ENCODE measurements at regions of chr1 and their contacts with region 1.

Region 1: GRCh38 chr1:198620951-198621824 is 17.7 kb upstream of the PTPRC start:
- DNase-seq: peak; percentile 92
- ATAC-seq: peak; percentile 67
- H3K4me3 ChIP-seq: peak overlapping the region; percentile 27 to 70 (median 52)
- H3K4me3 Mint-ChIP-seq: peak overlapping the region; percentile 86
- H3K27ac ChIP-seq: peak overlapping the region; percentile 90 to 95
- H3K27ac Mint-ChIP-seq: peak overlapping the region; percentile 98
- H3K4me1 ChIP-seq: peaks cover 69 to 75% of the 10 kb centered on the region in 2 donors
- H3K4me1 Mint-ChIP-seq: peaks cover 80% of the 10 kb centered on the region
- H3K27me3 ChIP-seq: no peaks in the 10 kb centered on the region
- H3K27me3 Mint-ChIP-seq: no peaks in the 10 kb centered on the region
- CTCF ChIP-seq: no peak

Region 2: DNA sequence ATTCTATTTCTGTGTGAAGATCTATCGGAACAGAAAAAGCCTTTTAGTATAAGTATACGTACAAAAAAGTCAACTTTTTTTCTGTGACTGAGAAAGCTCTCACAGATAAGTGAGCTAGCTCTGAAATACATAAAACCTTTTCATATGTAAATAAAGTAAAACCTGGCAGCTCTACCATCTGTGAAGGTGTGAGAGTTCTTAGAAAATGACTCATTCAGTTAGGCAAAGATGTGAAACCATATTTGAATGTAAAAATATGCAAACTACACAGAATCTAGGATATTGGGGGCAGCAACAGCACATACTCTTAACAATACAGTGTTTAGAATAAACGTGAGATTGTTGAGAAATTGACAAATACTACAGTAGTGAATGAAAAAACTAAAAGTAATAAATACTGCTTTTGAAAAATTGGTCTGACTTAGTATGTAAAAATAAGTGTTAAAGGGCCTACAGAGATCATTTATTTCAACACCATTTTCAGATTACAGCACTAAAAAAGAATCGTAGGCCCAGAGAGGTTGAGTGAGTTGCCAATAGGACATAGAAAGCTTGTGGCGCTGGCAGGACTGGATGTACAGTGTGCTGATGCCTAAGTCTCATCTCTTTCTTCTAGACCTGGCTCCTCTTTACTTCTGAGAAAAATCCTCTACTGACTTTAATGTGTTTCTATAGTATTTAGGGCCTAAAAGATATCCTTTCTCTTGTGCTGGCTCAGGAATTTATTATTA is 100.5 kb before region 1 on chr1:
- CTCF ChIA-PET with region 1: interaction called, 12 read pairs
- POLR2A ChIA-PET with region 1: no interaction called
- intact Hi-C with region 1: no loop called
- DNase-seq: peak; percentile 43
- ATAC-seq: peak; percentile 64
- H3K4me3 ChIP-seq: peak overlapping the region in 1 of 5 experiments; percentile 45
- H3K4me3 Mint-ChIP-seq: peak overlapping the region; percentile 67
- H3K27ac ChIP-seq: peak overlapping the region; percentile 35 to 59
- H3K27ac Mint-ChIP-seq: peak overlapping the region; percentile 37
- H3K4me1 ChIP-seq: peaks cover 20 to 34% of the 10 kb centered on the region in 2 donors
- H3K4me1 Mint-ChIP-seq: peaks cover 57% of the 10 kb centered on the region
- H3K27me3 ChIP-seq: no peaks in the 10 kb centered on the region
- H3K27me3 Mint-ChIP-seq: no peaks in the 10 kb centered on the region
- CTCF ChIP-seq: no peak

Region 3: GRCh38 chr1:198633675-198634121 is 12.5 kb after region 1 on chr1:
- CTCF ChIA-PET with region 1: interaction called, 93 read pairs
- POLR2A ChIA-PET with region 1: interaction called, 81 read pairs
- intact Hi-C with region 1: loop called (anchors 1 kb)
- DNase-seq: peak; percentile 84
- ATAC-seq: peak; percentile 76
- H3K4me3 ChIP-seq: no peak overlapping the region
- H3K4me3 Mint-ChIP-seq: peak overlapping the region; percentile 58
- H3K27ac ChIP-seq: peak overlapping the region; percentile 72 to 79
- H3K27ac Mint-ChIP-seq: peak overlapping the region; percentile 82
- H3K4me1 ChIP-seq: peaks cover 80 to 87% of the 10 kb centered on the region in 2 donors
- H3K4me1 Mint-ChIP-seq: peaks cover 83% of the 10 kb centered on the region
- H3K27me3 ChIP-seq: no peaks in the 10 kb centered on the region
- H3K27me3 Mint-ChIP-seq: no peaks in the 10 kb centered on the region
- CTCF ChIP-seq: no peak

Region 4: DNA sequence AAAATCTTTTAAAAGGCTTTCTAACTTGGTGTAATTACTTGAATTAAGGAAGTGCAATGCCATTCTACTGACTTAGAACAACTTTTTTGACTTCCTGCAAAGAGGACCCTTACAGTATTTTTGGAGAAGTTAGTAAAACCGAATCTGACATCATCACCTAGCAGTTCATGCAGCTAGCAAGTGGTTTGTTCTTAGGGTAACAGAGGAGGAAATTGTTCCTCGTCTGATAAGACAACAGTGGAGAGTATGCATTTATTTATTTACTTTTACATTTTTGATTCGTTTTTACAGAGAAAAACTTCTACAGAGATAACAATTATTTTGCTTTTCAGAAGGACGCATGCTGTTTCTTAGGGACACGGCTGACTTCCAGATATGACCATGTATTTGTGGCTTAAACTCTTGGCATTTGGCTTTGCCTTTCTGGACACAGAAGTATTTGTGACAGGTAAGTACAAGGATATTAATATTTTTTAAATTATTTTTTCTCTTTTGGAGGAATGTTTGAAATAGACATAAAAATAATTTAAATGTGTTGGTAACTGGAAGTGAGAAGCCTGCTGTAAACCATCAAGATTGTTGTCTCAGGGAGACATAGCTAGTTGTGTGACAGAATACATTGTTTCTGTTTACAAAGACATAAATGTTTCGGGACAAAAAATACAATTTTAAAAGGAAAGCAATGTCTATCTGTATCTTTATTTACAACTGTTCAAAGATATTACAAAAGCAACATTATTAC is 17.9 kb after region 1 on chr1 and contains the start of gene PTPRC:
- CTCF ChIA-PET with region 1: interaction called, 93 read pairs
- POLR2A ChIA-PET with region 1: interaction called, 81 read pairs
- intact Hi-C with region 1: loop called (anchors 1 kb)
- DNase-seq: peak; percentile 87
- ATAC-seq: peak; percentile 81
- H3K4me3 ChIP-seq: peak within 1 kb of the TSS; percentile 60 to 98 (median 87)
- H3K4me3 Mint-ChIP-seq: peak within 1 kb of the TSS; percentile 89
- H3K27ac ChIP-seq: peak within 1 kb of the TSS; percentile 82 to 94
- H3K27ac Mint-ChIP-seq: peak within 1 kb of the TSS; percentile 94
- H3K4me1 ChIP-seq: peaks cover 49 to 63% of the 10 kb centered on the region in 2 donors
- H3K4me1 Mint-ChIP-seq: peaks cover 65% of the 10 kb centered on the region
- H3K27me3 ChIP-seq: no peaks in the 10 kb centered on the region
- H3K27me3 Mint-ChIP-seq: no peaks in the 10 kb centered on the region
- CTCF ChIP-seq: no peak
- total RNA-seq, gene PTPRC: 543 and 545 TPM in 2 replicates

Region 5: DNA sequence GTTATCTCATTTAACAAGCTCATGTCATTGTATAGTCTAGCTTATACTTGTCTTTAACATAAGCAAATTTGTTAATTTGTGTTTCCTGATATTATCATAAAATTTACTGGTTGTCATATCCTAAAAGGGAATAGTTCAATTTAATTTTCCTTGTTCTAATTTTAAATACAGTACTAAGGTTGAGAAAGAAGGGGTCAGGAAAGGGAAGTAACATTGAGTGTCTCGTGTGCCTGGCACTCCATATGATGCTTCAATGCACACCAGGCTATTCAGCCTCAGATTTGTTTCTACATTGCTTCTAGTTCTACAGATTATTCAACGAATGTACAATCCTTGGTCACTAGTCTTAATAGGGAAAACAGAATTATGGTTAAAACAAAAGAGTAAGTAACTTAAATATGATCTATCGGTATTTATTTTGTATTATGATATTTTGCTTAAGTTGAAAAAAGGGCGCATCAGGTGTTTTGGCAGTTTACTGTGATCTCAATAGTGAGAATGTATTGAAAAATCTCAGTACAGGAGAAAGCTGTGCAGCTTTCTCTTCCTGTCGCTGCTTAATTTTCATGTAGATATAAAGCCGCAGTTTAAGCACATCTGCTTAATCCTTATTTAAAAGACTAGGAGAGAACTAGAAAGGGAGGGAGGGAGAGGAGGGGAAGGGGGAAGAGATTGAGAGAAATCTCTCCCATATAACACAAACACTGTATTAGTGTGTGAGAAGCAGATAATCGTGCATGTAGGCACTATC is 30.6 kb after region 1 on chr1:
- CTCF ChIA-PET with region 1: interaction called, 14 read pairs
- POLR2A ChIA-PET with region 1: interaction called, 5 read pairs
- intact Hi-C with region 1: loop called (anchors 1 kb)
- DNase-seq: peak; percentile 69
- ATAC-seq: peak; percentile 76
- H3K4me3 ChIP-seq: peak overlapping the region in 2 of 5 experiments; percentile 11 to 13
- H3K4me3 Mint-ChIP-seq: peak overlapping the region; percentile 68
- H3K27ac ChIP-seq: peak overlapping the region in 1 of 2 donors; percentile 90
- H3K27ac Mint-ChIP-seq: peak overlapping the region; percentile 73
- H3K4me1 ChIP-seq: peaks cover 50 to 94% of the 10 kb centered on the region in 2 donors
- H3K4me1 Mint-ChIP-seq: peaks cover 69% of the 10 kb centered on the region
- H3K27me3 ChIP-seq: no peaks in the 10 kb centered on the region
- H3K27me3 Mint-ChIP-seq: no peaks in the 10 kb centered on the region
- CTCF ChIP-seq: no peak

Region 6: GRCh38 chr1:198669023-198669698 is 48.0 kb after region 1 on chr1:
- CTCF ChIA-PET with region 1: interaction called, 30 read pairs
- POLR2A ChIA-PET with region 1: interaction called, 6 read pairs
- intact Hi-C with region 1: no loop called
- DNase-seq: no peak
- ATAC-seq: peak; percentile 56
- H3K4me3 ChIP-seq: no peak overlapping the region
- H3K4me3 Mint-ChIP-seq: peak overlapping the region; percentile 64
- H3K27ac ChIP-seq: peak overlapping the region; percentile 42 to 72
- H3K27ac Mint-ChIP-seq: peak overlapping the region; percentile 94
- H3K4me1 ChIP-seq: peaks cover 72 to 88% of the 10 kb centered on the region in 2 donors
- H3K4me1 Mint-ChIP-seq: peaks cover 83% of the 10 kb centered on the region
- H3K27me3 ChIP-seq: no peaks in the 10 kb centered on the region
- H3K27me3 Mint-ChIP-seq: no peaks in the 10 kb centered on the region
- CTCF ChIP-seq: no peak

Region 7: DNA sequence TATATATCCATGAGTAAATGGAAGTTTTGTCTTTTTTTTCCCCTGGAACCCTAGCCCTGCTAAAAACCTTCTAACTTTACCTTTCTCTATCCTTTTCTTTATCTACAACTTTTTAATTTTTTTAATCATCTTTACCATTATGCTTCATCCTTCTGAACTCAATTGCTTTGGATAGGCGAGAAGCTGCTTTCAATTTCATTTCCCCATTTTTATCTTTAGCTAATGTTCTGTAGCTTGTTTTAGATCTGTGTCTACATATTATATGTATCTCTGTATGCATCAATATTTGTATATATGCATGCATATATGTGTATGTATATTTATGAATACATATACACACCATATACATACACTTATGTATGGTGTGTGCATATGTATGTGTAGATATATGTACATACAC is 75.0 kb after region 1 on chr1:
- CTCF ChIA-PET with region 1: interaction called, 12 read pairs
- POLR2A ChIA-PET with region 1: interaction called, 4 read pairs
- intact Hi-C with region 1: no loop called
- DNase-seq: peak; percentile 62
- ATAC-seq: peak; percentile 69
- H3K4me3 ChIP-seq: peak overlapping the region in 1 of 5 experiments; percentile 19
- H3K4me3 Mint-ChIP-seq: peak overlapping the region; percentile 47
- H3K27ac ChIP-seq: peak overlapping the region in 1 of 2 donors; percentile 50
- H3K27ac Mint-ChIP-seq: peak overlapping the region; percentile 42
- H3K4me1 ChIP-seq: peaks cover 21 to 40% of the 10 kb centered on the region in 2 donors
- H3K4me1 Mint-ChIP-seq: peaks cover 66% of the 10 kb centered on the region
- H3K27me3 ChIP-seq: no peaks in the 10 kb centered on the region
- H3K27me3 Mint-ChIP-seq: no peaks in the 10 kb centered on the region
- CTCF ChIP-seq: no peak

Region 8: DNA sequence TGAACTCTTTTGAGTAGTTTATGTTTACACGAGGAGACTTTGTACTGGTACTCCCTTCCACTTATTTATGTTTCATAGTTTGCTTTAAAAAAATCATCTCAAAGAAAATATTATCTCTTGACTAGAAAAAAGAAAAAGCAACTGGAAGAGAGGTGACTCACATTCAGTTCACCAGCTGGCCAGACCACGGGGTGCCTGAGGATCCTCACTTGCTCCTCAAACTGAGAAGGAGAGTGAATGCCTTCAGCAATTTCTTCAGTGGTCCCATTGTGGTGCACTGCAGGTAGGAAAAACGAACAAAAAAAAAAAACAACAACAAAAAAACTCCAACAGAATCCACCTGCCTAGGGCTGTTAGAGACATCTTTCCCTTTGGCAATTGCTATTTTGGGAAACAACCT is 120.6 kb after region 1 on chr1:
- CTCF ChIA-PET with region 1: no interaction called
- POLR2A ChIA-PET with region 1: no interaction called
- intact Hi-C with region 1: no loop called
- DNase-seq: no peak
- ATAC-seq: no peak
- H3K4me3 ChIP-seq: no peak overlapping the region
- H3K4me3 Mint-ChIP-seq: no peak overlapping the region
- H3K27ac ChIP-seq: no peak overlapping the region
- H3K27ac Mint-ChIP-seq: no peak overlapping the region
- H3K4me1 ChIP-seq: no peaks in the 10 kb centered on the region
- H3K4me1 Mint-ChIP-seq: peaks cover 2% of the 10 kb centered on the region
- H3K27me3 ChIP-seq: no peaks in the 10 kb centered on the region
- H3K27me3 Mint-ChIP-seq: no peaks in the 10 kb centered on the region
- CTCF ChIP-seq: no peak

Measured in B cell (primary cell).